CD4-positive, alpha-beta memory T cell (primary cell): ENCODE measurements at regions of chr19 and their contacts with region 1.

Region 1: GRCh38 chr19:45506246-45506990 is 861 bp upstream of the VASP start:
- DNase-seq: peak; percentile 96 to 98 (median 97)
- H3K4me3 ChIP-seq: peak overlapping the region; percentile 95 to 97
- H3K4me3 Mint-ChIP-seq: peak overlapping the region; percentile 87 to 96 (median 94)
- H3K27ac ChIP-seq: peak overlapping the region; percentile 90
- H3K27ac Mint-ChIP-seq: peak overlapping the region; percentile 96 to 99 (median 97)
- H3K4me1 ChIP-seq: peaks cover 35% of the 10 kb centered on the region
- H3K4me1 Mint-ChIP-seq: peaks cover 20 to 61% (median 34%) of the 10 kb centered on the region in 4 donors
- H3K27me3 ChIP-seq: no peaks in the 10 kb centered on the region
- H3K27me3 Mint-ChIP-seq: no peaks in the 10 kb centered on the region

Region 2: GRCh38 chr19:45478454-45479238 is 27.8 kb before region 1 on chr19:
- CTCF ChIA-PET with region 1: interaction called, 10 read pairs
- POLR2A ChIA-PET with region 1: interaction called, 8 read pairs
- intact Hi-C with region 1: no loop called
- DNase-seq: peak; percentile 91 to 92 (median 91)
- H3K4me3 ChIP-seq: peak overlapping the region; percentile 51 to 74
- H3K4me3 Mint-ChIP-seq: peak overlapping the region; percentile 62 to 93 (median 84)
- H3K27ac ChIP-seq: peak overlapping the region; percentile 93
- H3K27ac Mint-ChIP-seq: peak overlapping the region; percentile 97 to 99 (median 98)
- H3K4me1 ChIP-seq: peaks cover 14% of the 10 kb centered on the region
- H3K4me1 Mint-ChIP-seq: peaks cover 25 to 46% (median 28%) of the 10 kb centered on the region in 4 donors
- H3K27me3 ChIP-seq: no peaks in the 10 kb centered on the region
- H3K27me3 Mint-ChIP-seq: peaks cover 1% of the 10 kb centered on the region in 2 donors

Region 3: DNA sequence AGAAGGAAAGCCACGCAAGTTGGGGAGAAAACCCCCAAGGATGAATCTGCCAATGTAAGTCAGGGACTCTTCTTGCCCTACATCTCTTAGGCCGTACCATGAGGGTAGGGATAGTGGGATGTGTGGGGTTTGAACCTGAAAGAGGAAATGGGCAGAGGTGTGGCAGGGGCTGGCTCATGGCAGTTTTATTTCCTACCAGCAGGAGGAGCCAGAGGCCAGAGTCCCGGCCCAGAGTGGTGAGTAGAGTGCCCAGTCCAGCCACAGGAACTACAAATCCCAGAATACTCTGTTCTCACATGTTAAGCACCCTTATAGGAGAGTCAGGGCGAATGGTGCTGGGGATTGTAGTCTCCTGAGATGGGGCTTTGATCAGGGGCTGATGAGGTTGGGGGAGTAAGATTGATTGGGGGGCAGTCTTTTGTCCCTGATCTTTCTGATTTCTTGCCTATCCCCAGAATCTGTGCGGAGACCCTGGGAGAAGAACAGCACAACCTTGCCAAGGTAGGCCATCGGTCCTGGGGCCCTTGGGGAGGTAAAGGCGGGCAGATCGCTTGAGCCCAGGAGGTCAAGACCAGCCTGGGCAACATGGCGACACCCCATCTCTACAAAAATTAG is 17.3 kb after region 1 on chr19:
- CTCF ChIA-PET with region 1: interaction called, 3 read pairs
- POLR2A ChIA-PET with region 1: interaction called, 5 read pairs
- intact Hi-C with region 1: loop called (anchors 1 kb)
- DNase-seq: peak; percentile 81 to 83 (median 82)
- H3K4me3 ChIP-seq: no peak overlapping the region
- H3K4me3 Mint-ChIP-seq: no peak overlapping the region
- H3K27ac ChIP-seq: no peak overlapping the region
- H3K27ac Mint-ChIP-seq: peak overlapping the region; percentile 77 to 87 (median 82)
- H3K4me1 ChIP-seq: peaks cover 3% of the 10 kb centered on the region
- H3K4me1 Mint-ChIP-seq: peaks cover 7 to 21% (median 11%) of the 10 kb centered on the region in 4 donors
- H3K27me3 ChIP-seq: no peaks in the 10 kb centered on the region
- H3K27me3 Mint-ChIP-seq: peaks cover 0 to 2% of the 10 kb centered on the region in 2 donors

Region 4: GRCh38 chr19:45558399-45558878 is 52.0 kb after region 1 on chr19:
- CTCF ChIA-PET with region 1: interaction called, 4 read pairs
- POLR2A ChIA-PET with region 1: interaction called, 3 read pairs
- intact Hi-C with region 1: loop called (anchors 1 kb)
- DNase-seq: peak; percentile 73 to 78 (median 76)
- H3K4me3 ChIP-seq: no peak overlapping the region
- H3K4me3 Mint-ChIP-seq: peak overlapping the region in 1 of 8 donors; percentile 34
- H3K27ac ChIP-seq: no peak overlapping the region
- H3K27ac Mint-ChIP-seq: peak overlapping the region in 4 of 7 donors; percentile 5 to 59 (median 34)
- H3K4me1 ChIP-seq: peaks cover 25% of the 10 kb centered on the region
- H3K4me1 Mint-ChIP-seq: peaks cover 9 to 32% (median 16%) of the 10 kb centered on the region in 4 donors
- H3K27me3 ChIP-seq: no peaks in the 10 kb centered on the region
- H3K27me3 Mint-ChIP-seq: no peaks in the 10 kb centered on the region

Region 5: DNA sequence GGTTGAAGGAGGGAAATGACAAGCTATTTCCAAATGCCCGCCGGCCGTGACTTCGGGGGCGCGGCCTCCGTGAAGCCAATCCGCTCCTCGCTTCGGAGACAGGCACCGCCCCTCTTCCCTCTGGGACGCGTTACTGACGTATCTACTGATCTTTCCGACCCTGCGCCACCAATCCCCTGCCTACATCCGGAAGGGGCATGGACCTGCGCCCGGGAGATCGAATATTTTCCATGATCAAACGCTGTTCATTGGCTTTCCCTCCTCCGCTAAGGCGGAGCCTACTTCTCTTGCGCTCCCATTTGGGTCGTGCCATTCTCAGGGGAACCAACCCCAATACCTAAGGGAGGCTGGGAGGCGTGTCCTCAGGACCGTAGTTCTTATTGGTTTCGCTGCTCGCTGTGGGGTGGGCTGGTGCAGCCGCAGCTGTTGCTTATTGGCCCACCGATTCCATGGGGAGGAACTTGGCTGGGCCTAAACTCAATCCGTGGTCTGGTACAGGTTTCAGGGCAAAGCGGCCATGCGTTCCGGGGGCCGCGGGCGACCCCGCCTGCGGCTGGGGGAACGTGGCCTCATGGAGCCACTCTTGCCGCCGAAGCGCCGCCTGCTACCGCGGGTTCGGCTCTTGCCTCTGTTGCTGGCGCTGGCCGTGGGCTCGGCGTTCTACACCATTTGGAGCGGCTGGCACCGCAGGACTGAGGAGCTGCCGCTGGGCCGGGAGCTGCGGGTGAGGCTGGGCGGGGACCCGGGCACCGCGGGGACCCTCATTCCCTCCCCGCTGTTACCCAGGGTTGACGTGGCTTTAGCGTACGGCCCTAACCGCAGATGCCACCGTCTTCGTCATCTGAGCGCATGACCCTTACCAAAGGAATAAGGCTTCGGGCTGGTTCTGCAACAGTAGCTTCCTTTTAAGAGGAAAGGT is 186.0 kb after region 1 on chr19 and contains the start of gene QPCTL:
- CTCF ChIA-PET with region 1: interaction called, 3 read pairs
- POLR2A ChIA-PET with region 1: no interaction called
- intact Hi-C with region 1: loop called (anchors 1 kb)
- DNase-seq: peak; percentile 98 to 99 (median 98)
- H3K4me3 ChIP-seq: peak within 1 kb of the TSS; percentile 70 to 94
- H3K4me3 Mint-ChIP-seq: peak within 1 kb of the TSS; percentile 90 to 100 (median 94)
- H3K27ac ChIP-seq: peak within 1 kb of the TSS; percentile 88
- H3K27ac Mint-ChIP-seq: peak within 1 kb of the TSS; percentile 91 to 100 (median 97)
- H3K4me1 ChIP-seq: peaks cover 17% of the 10 kb centered on the region
- H3K4me1 Mint-ChIP-seq: peaks cover 11 to 35% (median 17%) of the 10 kb centered on the region in 4 donors
- H3K27me3 ChIP-seq: no peaks in the 10 kb centered on the region
- H3K27me3 Mint-ChIP-seq: no peaks in the 10 kb centered on the region
- total RNA-seq, gene QPCTL: 10.8 to 11.4 TPM

Region 6: DNA sequence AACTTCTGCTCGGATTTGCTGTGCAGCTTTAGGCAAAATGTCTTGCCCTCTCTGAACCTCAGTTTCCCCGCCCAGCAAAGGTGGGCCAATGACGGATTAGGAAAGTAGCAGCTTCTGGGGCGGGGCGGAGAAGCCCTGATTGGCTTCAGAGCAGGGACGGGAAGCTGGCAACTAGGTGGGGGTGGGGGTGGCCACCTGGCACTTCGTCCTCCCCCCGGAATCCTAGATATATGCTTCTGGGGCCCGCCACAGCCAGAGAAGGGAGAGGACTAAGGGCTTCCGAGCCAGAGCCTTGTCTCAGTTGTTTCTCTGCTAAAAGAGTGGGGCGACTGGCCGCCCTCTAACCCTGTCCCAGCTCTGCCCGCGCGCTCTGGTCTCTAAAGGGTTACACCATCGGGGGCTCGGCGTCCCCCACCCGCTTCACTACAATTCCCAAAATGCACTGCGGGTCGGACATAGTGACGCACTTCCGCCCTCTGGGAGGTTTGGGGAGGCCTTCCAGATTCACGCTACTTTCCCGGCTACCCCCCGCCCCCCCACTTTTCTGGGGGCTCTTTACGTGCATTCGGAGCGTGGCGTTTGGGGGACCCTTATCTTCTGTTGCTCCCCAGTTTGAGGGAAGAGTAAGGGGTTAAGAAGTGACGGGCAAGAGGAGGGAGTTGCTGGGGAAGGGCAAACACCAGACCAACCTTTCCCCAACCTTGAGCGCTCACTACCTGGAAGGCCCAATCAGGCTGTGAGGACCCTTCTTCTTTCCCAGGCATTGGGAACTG is 380.2 kb after region 1 on chr19:
- CTCF ChIA-PET with region 1: no interaction called
- POLR2A ChIA-PET with region 1: no interaction called
- intact Hi-C with region 1: loop called (anchors 2 kb)
- DNase-seq: peak; percentile 87 to 93 (median 91)
- H3K4me3 ChIP-seq: peak overlapping the region; percentile 65 to 71
- H3K4me3 Mint-ChIP-seq: peak overlapping the region; percentile 94 to 98 (median 98)
- H3K27ac ChIP-seq: peak overlapping the region; percentile 68
- H3K27ac Mint-ChIP-seq: peak overlapping the region; percentile 97 to 99 (median 99)
- H3K4me1 ChIP-seq: peaks cover 40% of the 10 kb centered on the region
- H3K4me1 Mint-ChIP-seq: peaks cover 11 to 36% (median 19%) of the 10 kb centered on the region in 4 donors
- H3K27me3 ChIP-seq: no peaks in the 10 kb centered on the region
- H3K27me3 Mint-ChIP-seq: peaks cover 0 to under 1% of the 10 kb centered on the region in 2 donors